PC-9 (cell line): ENCODE measurements at regions of chr1 and their contacts with region 1.

Region 1: GRCh38 chr1:65449214-65449842 is 28.9 kb downstream of the LEPR start:
- DNase-seq: no peak
- H3K4me3 ChIP-seq: no peak overlapping the region
- H3K27ac ChIP-seq: no peak overlapping the region
- H3K4me1 ChIP-seq: no peaks in the 10 kb centered on the region
- H3K27me3 ChIP-seq: no peaks in the 10 kb centered on the region
- CTCF ChIP-seq: peak; percentile 46; the same call in 1 of the 2 replicates

Region 2: DNA sequence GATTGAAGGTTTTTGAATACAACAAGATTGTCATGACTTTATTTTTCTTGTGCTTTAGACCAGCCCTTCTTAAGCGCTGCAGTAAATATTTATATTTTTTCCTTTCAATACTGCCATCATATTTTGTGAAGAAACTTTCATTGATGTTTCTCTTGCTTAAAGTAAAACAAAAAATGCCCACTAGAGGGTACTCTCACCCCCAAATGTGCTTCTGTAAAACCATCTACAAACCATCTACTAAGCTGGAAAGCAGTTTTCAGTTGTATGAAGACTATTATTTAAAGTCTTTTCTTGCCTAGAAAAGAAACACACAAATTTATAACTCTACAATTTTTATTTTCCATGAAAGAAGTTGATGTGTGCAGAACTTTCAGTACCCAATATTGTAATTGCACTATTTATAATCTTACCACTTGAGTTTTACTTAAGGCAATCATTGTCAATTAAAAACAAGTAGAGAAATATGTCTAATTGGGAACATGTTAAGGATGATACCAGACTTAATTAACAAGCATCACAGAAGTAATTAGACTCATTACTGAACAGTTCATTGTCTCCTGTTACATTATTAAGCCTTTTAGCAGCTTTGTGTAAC is 18.1 kb before region 1 on chr1:
- CTCF ChIA-PET with region 1: no interaction called
- POLR2A ChIA-PET with region 1: interaction called, 12 read pairs
- intact Hi-C with region 1: no loop called
- DNase-seq: no peak
- H3K4me3 ChIP-seq: no peak overlapping the region
- H3K27ac ChIP-seq: no peak overlapping the region
- H3K4me1 ChIP-seq: peaks cover 22% of the 10 kb centered on the region
- H3K27me3 ChIP-seq: no peaks in the 10 kb centered on the region
- CTCF ChIP-seq: peak; percentile 70